HAP-1 (cell line): ENCODE measurements at regions of chr11 and their contacts with region 1.

Region 1: GRCh38 chr11:14519917-14520746 is at the start of gene PSMA1:
- DNase-seq: peak; percentile 96 to 97
- H3K4me3 ChIP-seq: peak within 1 kb of the TSS; percentile 80
- H3K4me1 ChIP-seq: peaks cover 8% of the 10 kb centered on the region
- H3K27me3 ChIP-seq: no peaks in the 10 kb centered on the region

Region 2: GRCh38 chr11:14643697-14644225 is 123.6 kb after region 1 on chr11 and contains the start of gene PDE3B:
- in situ Hi-C with region 1: loop called (anchors 10 kb)
- DNase-seq: peak; percentile 89 to 92
- H3K4me3 ChIP-seq: peak within 1 kb of the TSS; percentile 64
- H3K4me1 ChIP-seq: peaks cover 42% of the 10 kb centered on the region
- H3K27me3 ChIP-seq: no peaks in the 10 kb centered on the region

Region 3: DNA sequence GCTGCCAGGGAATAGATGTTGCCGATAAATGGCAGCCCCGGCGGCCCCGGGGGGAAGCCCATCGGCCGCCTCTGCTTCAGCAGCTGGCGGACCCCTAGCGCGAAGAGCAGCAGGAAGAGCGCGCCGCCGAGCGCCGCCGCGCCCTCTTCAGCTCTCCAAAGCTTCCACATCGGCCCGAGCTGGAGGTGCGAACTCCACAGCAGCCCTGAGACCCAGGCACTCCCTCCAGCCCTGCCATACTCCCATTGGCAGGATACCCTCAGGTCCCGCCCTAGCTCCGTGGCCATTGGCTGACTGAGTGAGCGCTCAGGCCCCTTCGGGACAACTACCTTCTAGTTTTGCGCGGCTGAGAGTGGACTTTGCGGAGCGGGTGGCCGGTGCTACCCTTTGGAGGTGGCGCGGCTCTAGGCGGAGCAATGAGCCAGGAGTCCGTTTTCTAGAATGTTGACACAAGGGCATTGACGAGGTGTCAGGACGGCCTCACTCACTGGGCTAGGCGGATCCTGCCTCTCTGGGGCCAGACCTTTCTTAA is 372.0 kb after region 1 on chr11 and contains the start of gene CYP2R1:
- in situ Hi-C with region 1: loop called (anchors 10 kb)
- DNase-seq: peak; percentile 91 to 96
- H3K4me3 ChIP-seq: peak within 1 kb of the TSS; percentile 43
- H3K4me1 ChIP-seq: peaks cover 7% of the 10 kb centered on the region
- H3K27me3 ChIP-seq: no peaks in the 10 kb centered on the region